AG04449 (cell line): ENCODE measurements at regions of chr17 and their contacts with region 1.

Region 1: DNA sequence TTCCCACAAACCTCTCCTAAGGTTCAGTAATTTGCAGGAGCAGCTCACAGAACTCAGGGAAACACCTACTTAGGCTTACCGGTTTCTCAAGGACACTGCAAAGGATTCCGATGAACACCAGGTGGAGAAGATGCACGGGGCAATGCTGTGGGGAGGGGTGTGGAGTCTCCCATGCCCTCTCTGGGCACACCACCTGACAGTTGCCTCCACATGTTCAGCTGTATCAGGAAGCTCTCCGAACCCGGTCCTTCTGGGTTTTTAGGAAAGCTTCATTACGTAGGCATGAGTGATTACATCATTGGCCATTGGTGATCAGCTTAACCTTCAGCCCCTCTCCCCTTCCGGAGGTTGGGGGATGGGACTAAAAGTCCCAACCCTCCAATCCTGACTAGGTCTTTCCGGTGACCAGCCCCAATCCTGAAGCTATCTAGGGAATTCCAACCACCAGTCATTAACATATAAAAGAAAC is 21.6 kb downstream of the C17orf58 start:
- DNase-seq: no peak
- H3K4me3 ChIP-seq: no peak overlapping the region
- CTCF ChIP-seq: no peak

Region 2: DNA sequence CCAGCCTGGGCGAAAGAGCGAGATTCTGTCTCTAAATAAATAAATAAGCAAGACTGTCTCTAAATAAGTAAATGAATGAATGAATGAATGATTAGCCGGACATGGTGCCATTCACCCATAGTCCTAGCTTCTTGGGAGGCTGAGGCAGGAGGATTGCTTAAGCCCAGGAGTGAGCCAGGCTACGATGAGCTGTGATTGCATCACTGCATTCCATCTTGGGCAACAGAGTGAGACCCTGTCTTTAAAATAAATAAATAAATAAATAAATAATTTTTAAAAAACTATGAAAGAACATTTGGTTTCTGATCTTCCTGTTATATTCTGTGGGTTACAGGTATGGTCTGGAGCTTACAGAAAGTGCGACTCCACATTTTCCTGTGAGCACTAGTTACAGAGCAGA is 43.4 kb before region 1 on chr17:
- CTCF ChIA-PET with region 1: no interaction called
- POLR2A ChIA-PET with region 1: no interaction called
- DNase-seq: no peak
- H3K4me3 ChIP-seq: no peak overlapping the region
- CTCF ChIP-seq: no peak

Region 3: DNA sequence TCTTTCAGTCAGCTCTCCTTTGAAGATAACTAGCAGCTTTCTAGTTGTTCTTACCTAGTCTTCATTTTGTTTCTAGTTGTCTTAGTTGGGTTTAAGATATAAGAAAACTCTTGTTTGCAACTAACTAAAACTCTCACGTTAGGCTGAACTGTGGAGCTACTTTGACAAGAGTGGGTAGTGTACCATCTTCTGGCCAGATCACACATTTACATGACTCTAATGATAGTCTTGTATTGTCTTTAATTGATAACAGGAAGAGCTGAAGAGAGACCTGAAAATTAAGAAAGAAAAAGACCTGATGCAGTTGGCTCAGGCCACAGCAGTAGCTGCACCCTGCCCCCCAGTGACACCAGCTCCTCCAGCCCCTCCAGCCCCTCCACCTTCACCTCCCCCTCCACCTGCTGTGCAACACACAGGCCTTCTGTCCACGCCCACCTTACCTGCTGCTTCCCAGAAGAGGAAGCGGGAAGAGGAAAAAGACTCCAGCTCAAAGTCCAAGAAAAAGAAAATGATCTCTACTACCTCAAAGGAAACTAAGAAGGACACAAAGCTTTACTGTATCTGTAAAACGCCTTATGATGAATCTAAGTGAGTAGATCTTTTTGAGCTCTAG is 15.2 kb before region 1 on chr17:
- CTCF ChIA-PET with region 1: interaction called, 13 read pairs
- POLR2A ChIA-PET with region 1: no interaction called
- DNase-seq: no peak
- H3K4me3 ChIP-seq: no peak overlapping the region
- CTCF ChIP-seq: no peak

Region 4: GRCh38 chr17:67992588-67993152 is 18.0 kb after region 1 on chr17:
- CTCF ChIA-PET with region 1: no interaction called
- POLR2A ChIA-PET with region 1: no interaction called
- DNase-seq: no peak
- H3K4me3 ChIP-seq: peak overlapping the region; percentile 72
- CTCF ChIP-seq: no peak